Mammary epithelial cell (primary cell): ENCODE measurements at regions of chr1 and their contacts with region 1.

Region 1: DNA sequence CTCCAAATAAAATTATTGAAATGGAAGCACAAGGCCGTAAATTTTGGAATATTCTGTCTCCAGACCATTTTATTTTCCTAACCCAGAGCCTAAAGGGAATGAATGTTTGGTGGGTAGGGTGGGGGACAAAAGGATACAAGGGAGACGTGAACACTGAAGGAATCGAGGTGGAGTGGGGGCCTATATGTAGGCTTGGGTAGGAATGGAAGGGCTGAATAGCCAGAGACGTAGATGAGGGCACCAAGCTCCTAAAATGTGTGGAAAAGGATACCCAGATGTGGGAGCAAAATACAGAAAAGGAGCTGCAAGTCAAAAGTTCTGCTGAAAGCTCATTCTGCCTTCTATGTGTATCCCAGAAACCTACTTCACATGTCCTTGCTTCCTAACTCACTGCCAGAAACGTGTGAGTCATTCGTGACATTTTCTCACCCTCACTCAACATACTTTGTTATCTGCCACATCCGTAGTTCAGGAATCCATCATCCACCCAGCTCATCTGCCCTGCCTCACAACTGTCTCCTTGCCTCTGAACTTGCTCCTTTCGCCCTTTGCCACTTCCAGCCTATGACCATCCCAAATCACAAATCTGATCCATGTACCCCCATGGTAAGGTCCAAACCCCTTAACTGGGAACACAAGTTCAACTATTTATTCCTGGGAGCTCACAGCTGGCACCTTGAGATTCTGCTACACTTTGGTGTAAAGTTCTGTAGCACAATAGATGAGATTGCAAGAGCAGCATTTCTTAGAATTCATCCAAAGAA is 84.1 kb upstream of the PRDX6 start:
- DNase-seq: peak; percentile 76
- H3K4me3 ChIP-seq: no peak overlapping the region
- H3K27ac ChIP-seq: no peak overlapping the region
- H3K4me1 ChIP-seq: peaks cover 12% of the 10 kb centered on the region
- H3K27me3 ChIP-seq: no peaks in the 10 kb centered on the region
- CTCF ChIP-seq: no peak

Region 2: GRCh38 chr1:173377266-173377665 is 15.8 kb before region 1 on chr1:
- CTCF ChIA-PET with region 1: no interaction called
- dilution Hi-C with region 1: no loop called
- in situ Hi-C with region 1: no loop called
- intact Hi-C with region 1: loop called (anchors 2 kb)
- DNase-seq: no peak
- H3K4me3 ChIP-seq: no peak overlapping the region
- H3K27ac ChIP-seq: no peak overlapping the region
- H3K4me1 ChIP-seq: no peaks in the 10 kb centered on the region
- H3K27me3 ChIP-seq: no peaks in the 10 kb centered on the region
- CTCF ChIP-seq: no peak